ENCODE measurements at regions of chr9 and their contacts with region 1.

Region 1: DNA sequence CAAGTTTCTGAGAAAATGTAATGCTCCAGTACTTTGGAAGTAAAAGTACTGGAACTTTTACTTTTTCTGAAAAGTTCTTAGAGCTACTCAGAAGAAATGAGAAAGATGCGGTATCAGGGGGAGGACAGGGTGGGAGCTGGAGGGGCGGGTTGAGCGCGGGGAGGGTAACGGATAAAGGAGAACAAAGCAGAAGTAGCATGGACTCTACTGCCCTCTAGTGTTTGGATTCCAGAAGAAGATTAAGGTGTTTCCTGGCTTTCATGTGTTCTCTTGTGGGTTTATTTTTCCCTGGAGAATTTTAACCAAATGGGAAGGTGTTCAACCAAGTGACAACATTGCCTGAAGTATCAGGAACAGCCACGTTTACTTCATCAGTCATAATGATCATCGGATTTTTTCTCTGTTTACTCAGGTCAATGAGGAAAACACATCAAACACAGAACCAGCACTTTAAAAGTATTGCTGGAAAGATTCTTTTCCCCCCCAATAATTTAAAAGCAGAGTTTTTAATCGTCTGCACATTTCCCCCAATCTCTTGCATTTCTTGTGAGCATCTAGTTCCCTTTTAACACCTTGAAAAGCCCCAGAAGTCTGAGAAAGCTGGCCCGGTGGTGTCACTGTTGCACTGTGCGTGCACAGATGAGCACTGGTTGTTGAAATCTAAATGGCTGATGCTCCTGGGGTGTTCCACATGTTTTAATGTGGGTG is 190.6 kb downstream of the MPDZ start:
- DNase-seq: peak in 1 of 2 experiments; percentile 5
- H3K4me3 ChIP-seq: no peak overlapping the region; the same call in 1 of the 2 replicates
- H3K27ac ChIP-seq: no peak overlapping the region
- H3K4me1 ChIP-seq: peaks cover 9% of the 10 kb centered on the region
- H3K27me3 ChIP-seq: no peaks in the 10 kb centered on the region
- CTCF ChIP-seq: peak; percentile 78

Region 2: GRCh38 chr9:12702160-12702758 is 386.6 kb before region 1 on chr9:
- CTCF ChIA-PET with region 1: interaction called, 5 read pairs
- POLR2A ChIA-PET with region 1: no interaction called
- intact Hi-C with region 1: loop called (anchors 5 kb)
- DNase-seq: peak; percentile 23 to 50
- H3K4me3 ChIP-seq: no peak overlapping the region
- H3K27ac ChIP-seq: no peak overlapping the region
- H3K4me1 ChIP-seq: no peaks in the 10 kb centered on the region
- H3K27me3 ChIP-seq: no peaks in the 10 kb centered on the region
- CTCF ChIP-seq: peak; percentile 71

Region 3: GRCh38 chr9:13033959-13034693 is 54.7 kb before region 1 on chr9:
- CTCF ChIA-PET with region 1: interaction called, 5 read pairs
- POLR2A ChIA-PET with region 1: no interaction called
- intact Hi-C with region 1: loop called (anchors 2 kb)
- DNase-seq: peak; percentile 37 to 57
- H3K4me3 ChIP-seq: peak overlapping the region; percentile 37; the same call in 1 of the 2 replicates
- H3K27ac ChIP-seq: no peak overlapping the region
- H3K4me1 ChIP-seq: no peaks in the 10 kb centered on the region
- H3K27me3 ChIP-seq: no peaks in the 10 kb centered on the region
- CTCF ChIP-seq: peak; percentile 75